ENCODE measurements at regions of chr12 and their contacts with region 1.

Region 1: GRCh38 chr12:75658901-75659383 is 147.5 kb upstream of the KRR1 start:
- DNase-seq: peak; percentile 16
- H3K4me3 Mint-ChIP-seq: no peak overlapping the region
- H3K27ac Mint-ChIP-seq: no peak overlapping the region
- H3K4me1 Mint-ChIP-seq: peaks cover 9% of the 10 kb centered on the region
- H3K27me3 Mint-ChIP-seq: peaks cover 2% of the 10 kb centered on the region

Region 2: DNA sequence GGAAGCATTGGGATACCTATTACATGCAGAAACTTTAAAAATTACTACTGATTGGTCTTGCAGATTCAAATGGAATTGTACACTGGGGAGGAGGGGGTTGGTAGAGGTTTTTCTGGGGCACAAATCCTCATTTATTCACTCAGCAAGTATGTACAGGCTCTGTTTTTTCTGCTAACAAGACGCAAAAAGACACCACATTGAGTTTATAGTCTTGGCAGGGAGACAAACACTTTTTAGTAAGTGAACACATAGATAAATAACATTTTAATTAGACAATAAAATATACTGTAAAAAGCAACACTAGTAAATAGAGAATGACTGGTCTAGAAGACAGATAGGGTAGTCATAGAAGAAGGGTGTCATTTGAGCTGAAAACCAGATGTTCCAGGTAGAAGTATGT is 244.3 kb before region 1 on chr12:
- CTCF ChIA-PET with region 1: no interaction called
- intact Hi-C with region 1: no loop called
- DNase-seq: no peak
- H3K4me3 Mint-ChIP-seq: no peak overlapping the region
- H3K27ac Mint-ChIP-seq: no peak overlapping the region
- H3K4me1 Mint-ChIP-seq: no peaks in the 10 kb centered on the region
- H3K27me3 Mint-ChIP-seq: no peaks in the 10 kb centered on the region

Region 3: DNA sequence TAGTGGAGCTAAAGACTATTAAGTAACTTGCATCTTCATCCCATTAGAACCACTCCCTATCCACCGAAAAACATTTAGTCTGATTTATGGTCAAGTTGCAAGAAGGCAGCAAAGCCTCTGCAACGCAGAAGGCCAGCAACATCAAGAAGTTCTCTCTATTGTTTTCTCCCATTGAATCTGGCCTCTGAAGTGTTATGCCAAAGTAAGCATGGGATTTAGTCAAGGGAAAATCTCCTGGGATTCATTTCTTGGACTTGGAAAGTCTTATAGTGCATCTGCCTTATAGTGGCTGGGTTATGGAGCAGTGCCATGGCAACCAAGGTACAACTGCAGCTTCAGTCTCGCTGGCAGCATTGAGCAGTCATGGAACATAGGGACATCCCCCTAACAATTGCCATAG is 59.9 kb before region 1 on chr12:
- CTCF ChIA-PET with region 1: no interaction called
- intact Hi-C with region 1: no loop called
- DNase-seq: no peak
- H3K4me3 Mint-ChIP-seq: no peak overlapping the region
- H3K27ac Mint-ChIP-seq: no peak overlapping the region
- H3K4me1 Mint-ChIP-seq: no peaks in the 10 kb centered on the region
- H3K27me3 Mint-ChIP-seq: peaks cover 3% of the 10 kb centered on the region

Region 4: GRCh38 chr12:75684678-75685601 is 26.0 kb after region 1 on chr12:
- CTCF ChIA-PET with region 1: no interaction called
- intact Hi-C with region 1: loop called (anchors 1 kb)
- DNase-seq: no peak
- H3K4me3 Mint-ChIP-seq: no peak overlapping the region
- H3K27ac Mint-ChIP-seq: no peak overlapping the region
- H3K4me1 Mint-ChIP-seq: peaks cover 9% of the 10 kb centered on the region
- H3K27me3 Mint-ChIP-seq: peaks cover 5% of the 10 kb centered on the region

Region 5: DNA sequence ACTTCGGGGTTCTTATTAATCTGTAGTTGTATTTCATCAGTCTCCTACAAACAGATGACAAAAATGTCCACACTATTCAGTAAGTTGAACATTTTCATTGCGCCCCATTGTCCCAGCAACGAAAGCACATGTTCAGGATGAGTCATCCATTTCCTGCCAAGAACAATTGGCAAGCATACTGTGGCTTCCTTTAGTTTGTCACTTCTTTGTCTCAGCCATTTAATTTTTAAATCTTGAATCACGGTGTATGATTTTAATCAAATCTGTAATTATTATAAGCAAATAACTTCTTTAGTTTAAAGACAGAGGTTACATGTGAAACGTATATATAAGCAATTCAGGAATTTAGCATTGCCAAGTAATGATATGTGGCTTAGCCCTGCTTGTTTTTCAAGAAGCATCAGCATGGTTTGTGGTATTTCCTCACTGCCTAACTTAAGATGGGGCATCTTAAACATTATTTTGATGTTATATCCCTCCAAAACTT is 63.8 kb after region 1 on chr12:
- CTCF ChIA-PET with region 1: no interaction called
- intact Hi-C with region 1: loop called (anchors 5 kb)
- DNase-seq: peak; percentile 64
- H3K4me3 Mint-ChIP-seq: no peak overlapping the region
- H3K27ac Mint-ChIP-seq: peak overlapping the region; percentile 18
- H3K4me1 Mint-ChIP-seq: peaks cover 15% of the 10 kb centered on the region
- H3K27me3 Mint-ChIP-seq: peaks cover 6% of the 10 kb centered on the region

Measured in activated naive CD4-positive, alpha-beta T cell treated with anti-CD3 and anti-CD28 coated beads for 36 hours (primary cell).